Left ventricle myocardium inferior (tissue), 1 donor: ENCODE measurements at regions of chr14 and their contacts with region 1.

Region 1: DNA sequence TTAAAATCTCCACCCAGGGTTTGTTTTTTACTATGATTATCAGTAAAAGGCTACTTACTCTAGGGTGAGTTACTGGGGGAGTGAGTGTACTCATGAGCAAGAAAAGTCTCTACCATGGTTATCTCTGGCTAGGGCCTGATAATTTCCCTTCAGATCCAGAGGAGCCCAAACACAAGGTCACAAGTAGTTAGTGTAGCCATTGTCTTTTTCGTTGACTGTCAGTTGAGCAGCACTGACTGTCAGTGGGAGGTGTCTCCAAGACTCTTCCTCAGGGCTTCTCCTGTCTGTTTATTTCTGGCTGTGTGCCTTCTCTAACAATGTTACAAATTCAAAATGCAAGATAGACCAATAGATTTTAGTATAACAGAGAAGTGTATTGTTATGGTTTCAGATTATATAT is 181.2 kb upstream of the MIS18BP1 start:
- DNase-seq: no peak
- H3K4me3 ChIP-seq: no peak overlapping the region
- H3K27ac ChIP-seq: no peak overlapping the region
- H3K4me1 ChIP-seq: no peaks in the 10 kb centered on the region
- H3K27me3 ChIP-seq: no peaks in the 10 kb centered on the region
- CTCF ChIP-seq: no peak

Region 2: DNA sequence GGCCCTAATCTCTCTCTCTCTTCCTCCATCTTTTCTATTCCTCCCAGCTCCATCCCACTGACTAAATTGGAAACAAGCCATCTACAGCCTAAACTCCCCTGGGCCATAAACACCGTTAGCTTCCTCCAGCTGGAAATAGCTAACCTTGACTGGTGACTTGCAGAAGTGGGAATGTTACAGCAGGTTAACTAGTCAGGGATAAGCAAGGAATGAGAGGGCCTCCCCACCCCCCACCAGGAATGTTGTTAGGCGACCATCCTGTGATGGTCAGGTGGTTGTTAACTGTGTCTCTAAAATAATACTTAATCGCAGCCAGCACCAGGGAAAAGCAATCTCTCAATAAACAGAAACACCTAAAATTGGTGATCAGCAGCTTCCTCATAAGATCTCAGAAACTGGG is 222.0 kb before region 1 on chr14:
- intact Hi-C with region 1: no loop called
- DNase-seq: no peak
- H3K4me3 ChIP-seq: no peak overlapping the region
- H3K27ac ChIP-seq: no peak overlapping the region
- H3K4me1 ChIP-seq: peaks cover 16% of the 10 kb centered on the region
- H3K27me3 ChIP-seq: no peaks in the 10 kb centered on the region
- CTCF ChIP-seq: no peak

Region 3: DNA sequence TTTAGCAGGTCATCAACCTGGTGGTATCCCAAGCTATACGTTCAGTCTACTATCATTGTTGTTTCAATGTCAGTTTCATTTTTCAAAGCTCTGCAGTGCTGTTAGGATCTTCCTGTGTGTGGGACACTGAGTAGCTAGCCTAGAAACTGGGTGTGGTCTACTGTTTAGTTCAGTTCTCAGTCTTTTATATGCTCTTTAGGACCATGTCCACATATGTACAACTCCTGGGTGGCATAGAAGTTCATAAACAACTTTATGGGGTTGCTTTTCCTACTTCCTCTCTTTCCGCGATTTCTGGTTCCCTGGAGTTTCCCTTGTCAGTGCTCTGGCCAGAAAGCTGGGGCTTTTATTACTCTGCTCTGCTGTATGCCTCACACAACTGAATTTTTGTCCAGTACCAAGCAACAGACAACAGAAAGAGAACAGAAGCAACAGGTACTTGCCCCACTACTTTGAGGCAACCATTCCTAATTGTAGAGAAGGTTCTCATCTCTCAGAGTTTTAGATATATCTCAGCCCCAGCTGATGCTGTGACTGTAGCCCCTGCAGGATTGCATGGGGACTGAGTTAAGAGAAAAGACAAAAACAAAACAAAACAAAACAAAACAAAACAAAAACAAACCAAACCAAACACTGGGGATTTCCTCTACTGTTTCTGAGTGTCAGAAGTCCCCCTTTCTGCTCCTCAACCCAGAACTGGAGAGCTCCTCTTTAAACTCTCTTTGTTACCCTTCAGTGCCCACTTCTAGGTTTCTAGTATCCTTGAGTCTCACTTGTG is 211.5 kb before region 1 on chr14:
- intact Hi-C with region 1: no loop called
- DNase-seq: no peak
- H3K4me3 ChIP-seq: no peak overlapping the region
- H3K27ac ChIP-seq: no peak overlapping the region
- H3K4me1 ChIP-seq: no peaks in the 10 kb centered on the region
- H3K27me3 ChIP-seq: no peaks in the 10 kb centered on the region
- CTCF ChIP-seq: no peak

Region 4: GRCh38 chr14:45377166-45377565 is 57.1 kb before region 1 on chr14:
- intact Hi-C with region 1: no loop called
- DNase-seq: no peak
- H3K4me3 ChIP-seq: no peak overlapping the region
- H3K27ac ChIP-seq: no peak overlapping the region
- H3K4me1 ChIP-seq: no peaks in the 10 kb centered on the region
- H3K27me3 ChIP-seq: no peaks in the 10 kb centered on the region
- CTCF ChIP-seq: no peak

Region 5: GRCh38 chr14:45526715-45527549 is 92.7 kb after region 1 on chr14:
- intact Hi-C with region 1: loop called (anchors 10 kb)
- DNase-seq: no peak
- H3K4me3 ChIP-seq: no peak overlapping the region
- H3K27ac ChIP-seq: no peak overlapping the region
- H3K4me1 ChIP-seq: no peaks in the 10 kb centered on the region
- H3K27me3 ChIP-seq: no peaks in the 10 kb centered on the region
- CTCF ChIP-seq: peak; percentile 63

Region 6: GRCh38 chr14:46322730-46323403 is 888.6 kb after region 1 on chr14:
- intact Hi-C with region 1: no loop called
- DNase-seq: no peak
- H3K4me3 ChIP-seq: no peak overlapping the region
- H3K27ac ChIP-seq: no peak overlapping the region
- H3K4me1 ChIP-seq: no peaks in the 10 kb centered on the region
- H3K27me3 ChIP-seq: no peaks in the 10 kb centered on the region
- CTCF ChIP-seq: no peak